Activated T-helper 1 cell treated with anti-CD3 and anti-CD28 coated beads, Interleukin-12 subunit alpha, Interleukin-12 subunit beta, Interleukin-2, Interleukin-4 antibody, amounts not matched to agents 30 ng/mL and 10 ng/mL and 1 ng/mL, durations not matched to agents 14 hours and 24 hours and 36 hours (primary cell): ENCODE measurements at regions of chr9 and their contacts with region 1.

Region 1: GRCh38 chr9:135971892-135972291 is 10.7 kb upstream of the UBAC1 start:
- DNase-seq: peak; percentile 32
- H3K4me3 Mint-ChIP-seq: no peak overlapping the region
- H3K27ac Mint-ChIP-seq: no peak overlapping the region
- H3K4me1 Mint-ChIP-seq: peaks cover 9% of the 10 kb centered on the region
- H3K27me3 Mint-ChIP-seq: peaks cover 4% of the 10 kb centered on the region

Region 2: GRCh38 chr9:135500525-135501358 is 471.1 kb before region 1 on chr9 and contains the start of gene MRPS2:
- intact Hi-C with region 1: no loop called
- DNase-seq: peak; percentile 85
- H3K4me3 Mint-ChIP-seq: peak within 1 kb of the TSS; percentile 92
- H3K27ac Mint-ChIP-seq: peak within 1 kb of the TSS; percentile 91
- H3K4me1 Mint-ChIP-seq: peaks cover 18% of the 10 kb centered on the region
- H3K27me3 Mint-ChIP-seq: peaks cover 7% of the 10 kb centered on the region
- total RNA-seq, gene MRPS2: 66.6 and 70.8 TPM in 2 replicates

Region 3: GRCh38 chr9:135701959-135702721 is 269.8 kb before region 1 on chr9 and contains the start of gene KCNT1:
- intact Hi-C with region 1: loop called (anchors 10 kb)
- DNase-seq: peak; percentile 25
- H3K4me3 Mint-ChIP-seq: no peak within 1 kb of the TSS
- H3K27ac Mint-ChIP-seq: no peak within 1 kb of the TSS
- H3K4me1 Mint-ChIP-seq: no peaks in the 10 kb centered on the region
- H3K27me3 Mint-ChIP-seq: peaks cover 3% of the 10 kb centered on the region
- total RNA-seq, gene KCNT1: not detected in 2 replicates

Region 4: DNA sequence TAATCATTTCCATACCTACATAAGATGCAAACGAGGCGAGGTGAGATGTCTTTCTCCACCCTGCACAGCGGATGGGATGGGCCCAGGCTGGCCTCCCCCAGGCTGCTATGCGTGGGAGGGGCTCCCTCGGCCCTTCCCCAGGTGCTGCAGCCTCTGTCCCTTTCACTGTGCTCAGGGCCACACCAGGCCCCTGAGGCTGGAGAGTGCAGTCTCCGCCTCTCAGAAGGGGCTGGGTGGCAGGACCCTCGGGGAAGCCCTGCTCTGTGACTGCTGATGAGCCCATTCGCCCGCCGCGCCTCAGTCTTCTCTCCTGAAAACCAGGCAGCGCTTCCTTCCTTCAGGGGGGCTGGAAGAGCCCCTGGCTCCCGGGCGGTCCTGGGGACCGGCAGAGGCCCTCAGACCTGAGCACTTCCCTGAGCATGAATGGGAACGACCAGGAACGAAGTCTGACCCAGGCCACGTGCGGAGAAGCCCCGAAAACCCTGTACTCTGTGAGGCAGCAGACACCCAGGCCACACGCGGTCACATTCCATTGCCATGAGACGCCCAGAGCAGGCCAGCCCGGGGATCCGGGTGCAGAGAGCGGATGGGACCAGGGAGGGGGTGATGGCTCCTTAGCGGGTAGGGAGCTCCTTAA is 595.9 kb after region 1 on chr9:
- intact Hi-C with region 1: no loop called
- DNase-seq: no peak
- H3K4me3 Mint-ChIP-seq: no peak overlapping the region
- H3K27ac Mint-ChIP-seq: no peak overlapping the region
- H3K4me1 Mint-ChIP-seq: no peaks in the 10 kb centered on the region
- H3K27me3 Mint-ChIP-seq: no peaks in the 10 kb centered on the region